Activated T-helper 1 cell treated with anti-CD3 and anti-CD28 coated beads, Interleukin-12 subunit alpha, Interleukin-12 subunit beta, Interleukin-2, Interleukin-4 antibody, amounts not matched to agents 30 ng/mL and 10 ng/mL and 1 ng/mL, durations not matched to agents 14 hours and 24 hours and 36 hours (primary cell): ENCODE measurements at regions of chr16 and their contacts with region 1.

Region 1: GRCh38 chr16:66954097-66954659 is 6.9 kb upstream of the CES3 start:
- DNase-seq: peak; percentile 71
- H3K4me3 Mint-ChIP-seq: no peak overlapping the region
- H3K27ac Mint-ChIP-seq: peak overlapping the region; percentile 18
- H3K4me1 Mint-ChIP-seq: peaks cover 30% of the 10 kb centered on the region
- H3K27me3 Mint-ChIP-seq: peaks cover 16% of the 10 kb centered on the region

Region 2: DNA sequence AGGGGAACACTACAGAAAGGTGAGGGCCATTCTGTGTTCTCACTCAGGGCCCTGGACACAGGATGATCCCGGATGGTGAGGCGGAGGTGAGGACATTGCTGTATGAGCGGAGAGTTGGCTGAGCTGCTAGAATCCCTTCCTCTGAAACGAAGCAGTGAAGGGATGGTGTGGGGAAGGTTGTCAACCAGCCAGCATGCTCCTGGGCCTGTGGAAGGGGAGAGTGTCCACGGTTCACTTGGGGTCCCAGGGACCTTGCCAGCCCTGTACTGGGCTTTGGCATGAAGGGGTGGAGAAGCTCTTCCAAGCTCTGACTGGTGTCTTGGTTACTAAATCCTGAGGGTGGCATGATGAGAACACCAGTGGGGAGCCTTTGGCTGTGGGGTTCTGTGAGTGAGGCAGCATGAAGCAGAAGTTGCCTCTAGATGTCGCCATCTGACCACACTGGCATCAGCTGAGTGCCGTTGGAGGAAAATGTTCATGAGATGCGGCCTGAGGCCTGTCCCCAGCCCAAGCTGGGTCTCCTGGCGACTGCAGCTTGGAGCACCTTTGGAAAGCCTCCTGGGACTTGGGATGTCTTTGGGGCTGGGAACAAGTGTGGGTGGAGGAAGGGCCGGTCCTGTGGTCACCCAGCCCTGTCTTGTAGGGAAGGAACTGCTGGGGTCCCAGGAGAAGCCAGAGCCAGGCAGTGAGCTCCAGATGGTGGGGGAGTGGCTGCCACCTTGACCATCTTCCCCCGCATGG is 59.1 kb before region 1 on chr16:
- intact Hi-C with region 1: loop called (anchors 2 kb)
- DNase-seq: peak; percentile 44
- H3K4me3 Mint-ChIP-seq: no peak overlapping the region
- H3K27ac Mint-ChIP-seq: peak overlapping the region; percentile 4
- H3K4me1 Mint-ChIP-seq: peaks cover 24% of the 10 kb centered on the region
- H3K27me3 Mint-ChIP-seq: no peaks in the 10 kb centered on the region

Region 3: DNA sequence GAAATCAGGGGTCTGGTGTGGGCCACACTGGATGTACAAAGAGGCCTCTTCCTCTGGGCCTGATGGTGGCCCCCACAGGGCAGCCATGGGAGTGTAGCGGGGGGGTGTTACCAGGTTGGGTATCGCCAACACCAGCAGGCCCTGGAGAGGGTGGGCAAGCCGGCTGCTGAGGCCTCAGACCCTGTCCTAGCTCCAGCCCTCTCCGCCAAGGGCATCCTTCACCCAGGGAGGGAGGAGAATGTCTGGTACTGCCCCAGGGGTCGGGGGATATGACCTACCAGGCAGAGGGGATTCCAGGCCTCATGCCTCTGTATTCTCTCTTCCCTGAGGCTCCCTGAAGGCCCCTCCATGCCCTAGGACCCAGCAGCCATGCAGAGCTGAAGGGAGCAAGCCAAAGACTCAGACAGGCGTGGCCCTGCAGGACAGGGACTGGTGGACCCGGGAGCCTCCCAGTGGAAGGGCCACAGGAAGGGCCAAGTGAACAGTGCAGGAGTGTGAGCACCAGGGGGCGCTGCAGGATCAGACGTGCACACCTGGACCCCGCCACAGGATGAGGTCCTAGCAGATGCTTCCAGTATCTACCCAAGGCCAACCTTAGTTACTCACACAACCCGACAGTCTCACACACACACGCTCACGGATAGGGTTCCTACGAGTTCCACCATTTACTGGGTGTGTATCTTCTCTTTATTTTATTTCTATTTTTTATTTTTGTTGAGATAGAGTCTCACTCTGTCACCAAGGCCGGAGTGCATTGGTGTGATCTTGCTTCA is 23.3 kb after region 1 on chr16:
- intact Hi-C with region 1: loop called (anchors 1 kb)
- DNase-seq: peak; percentile 83
- H3K4me3 Mint-ChIP-seq: no peak overlapping the region
- H3K27ac Mint-ChIP-seq: peak overlapping the region; percentile 75
- H3K4me1 Mint-ChIP-seq: peaks cover 57% of the 10 kb centered on the region
- H3K27me3 Mint-ChIP-seq: no peaks in the 10 kb centered on the region

Region 4: DNA sequence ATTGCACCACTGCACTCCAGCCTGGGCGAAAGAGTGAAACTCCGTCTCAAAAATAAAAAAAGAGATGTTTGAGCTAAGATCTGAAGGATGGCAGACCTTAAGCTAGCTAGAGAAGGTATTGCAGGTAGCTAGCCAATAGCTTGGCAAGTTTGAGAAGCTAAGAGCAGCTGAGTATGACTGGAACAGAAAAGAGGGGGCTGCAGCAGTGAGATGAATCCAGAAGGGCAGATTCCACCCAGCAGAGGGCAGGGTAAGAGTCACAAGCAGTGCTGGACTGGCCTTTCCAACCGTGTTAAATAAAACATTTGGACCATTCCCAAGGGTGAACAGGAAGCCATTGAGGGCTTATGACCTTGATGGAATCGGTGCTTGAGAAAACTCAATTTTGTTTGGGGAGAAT is 149.9 kb after region 1 on chr16:
- intact Hi-C with region 1: loop called (anchors 5 kb)
- DNase-seq: no peak
- H3K4me3 Mint-ChIP-seq: no peak overlapping the region
- H3K27ac Mint-ChIP-seq: no peak overlapping the region
- H3K4me1 Mint-ChIP-seq: peaks cover 31% of the 10 kb centered on the region
- H3K27me3 Mint-ChIP-seq: no peaks in the 10 kb centered on the region

Region 5: DNA sequence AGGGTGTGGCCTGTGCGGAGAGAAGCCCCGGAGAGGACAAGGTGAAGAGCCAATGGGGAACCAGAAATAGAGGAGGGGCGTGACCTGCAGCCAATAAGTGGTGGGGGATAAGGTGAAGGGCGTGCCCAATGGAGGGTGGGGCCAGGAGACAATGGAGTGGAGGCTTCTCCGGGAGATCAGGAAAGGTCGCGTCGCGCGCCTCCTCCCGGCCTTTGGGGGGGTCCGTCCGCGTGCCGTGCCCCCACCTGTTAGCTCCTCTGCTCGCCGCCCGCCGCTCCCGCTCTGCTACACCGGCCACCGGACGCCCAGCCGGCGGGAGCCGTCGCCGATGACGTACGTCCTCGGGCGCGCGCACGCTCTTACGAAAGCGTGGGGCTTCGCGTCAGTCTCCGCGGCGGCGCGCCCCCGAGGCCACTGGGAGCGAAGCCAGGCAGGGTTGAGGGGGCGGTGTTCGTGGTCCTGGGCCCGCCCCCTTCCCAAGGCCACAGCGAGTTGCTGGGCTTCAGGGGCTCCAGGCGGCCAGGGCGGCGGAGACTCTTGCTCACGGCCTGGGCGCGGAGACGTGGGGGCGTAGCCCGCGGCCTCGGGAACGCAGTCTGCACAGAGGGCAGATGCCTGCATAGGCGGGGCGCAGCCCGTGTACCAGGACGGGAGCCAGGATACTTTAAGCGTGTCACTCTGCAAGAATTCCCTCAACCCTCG is 229.6 kb after region 1 on chr16 and contains the start of gene MATCAP1:
- intact Hi-C with region 1: loop called (anchors 1 kb)
- DNase-seq: peak; percentile 94
- H3K4me3 Mint-ChIP-seq: peak within 1 kb of the TSS; percentile 62
- H3K27ac Mint-ChIP-seq: no peak within 1 kb of the TSS
- H3K4me1 Mint-ChIP-seq: peaks cover 20% of the 10 kb centered on the region
- H3K27me3 Mint-ChIP-seq: peaks cover 8% of the 10 kb centered on the region
- total RNA-seq, gene MATCAP1: 45.5 and 48.2 TPM in 2 replicates

Region 6: DNA sequence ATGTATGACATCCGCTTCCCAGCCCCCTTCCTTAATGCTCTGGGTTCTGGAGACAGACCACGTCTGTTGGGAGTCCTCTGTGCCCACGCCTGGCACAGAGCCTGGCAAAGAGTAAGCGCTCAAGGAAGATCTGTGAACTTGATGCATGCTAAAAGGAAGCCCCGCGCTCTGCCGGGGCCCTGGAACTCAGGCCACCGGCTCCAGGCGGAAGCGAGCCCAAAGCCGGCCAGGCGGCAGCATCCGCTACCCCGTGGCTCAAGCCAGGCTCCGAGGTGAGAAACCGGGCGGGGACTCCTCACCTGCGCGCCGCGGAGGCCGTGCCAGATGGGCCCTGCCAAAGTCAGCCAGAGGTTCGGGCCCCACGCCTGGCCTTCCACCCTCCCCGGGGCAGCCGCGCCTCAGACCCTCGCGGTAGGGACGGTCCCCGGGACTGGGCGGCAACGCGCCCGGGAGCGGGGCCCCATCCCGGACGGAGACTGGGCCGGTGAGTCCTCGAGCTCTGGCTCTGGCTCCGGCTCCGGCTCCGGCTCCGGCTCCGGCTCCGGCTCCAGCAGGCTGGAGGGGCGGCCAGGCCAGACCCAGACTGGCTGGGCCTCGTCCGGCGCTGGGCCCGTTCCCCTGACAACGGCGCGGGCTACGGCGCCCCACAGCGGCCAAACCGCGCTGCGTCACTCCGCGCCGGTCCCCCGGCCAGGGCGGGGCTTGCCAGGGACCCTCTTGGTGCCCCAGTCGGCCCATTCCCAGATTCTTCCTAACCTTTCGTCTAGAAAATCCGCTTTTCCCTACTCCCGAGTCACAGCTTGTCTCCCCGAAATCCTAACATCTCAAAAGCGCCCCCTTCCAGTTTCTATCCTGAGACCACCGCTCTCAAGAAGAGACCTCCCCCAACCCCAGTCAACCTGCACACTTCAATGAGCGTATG is 462.0 kb after region 1 on chr16 and contains the start of gene ZDHHC1:
- intact Hi-C with region 1: loop called (anchors 5 kb)
- DNase-seq: peak; percentile 34
- H3K4me3 Mint-ChIP-seq: peak within 1 kb of the TSS; percentile 84
- H3K27ac Mint-ChIP-seq: peak within 1 kb of the TSS; percentile 50
- H3K4me1 Mint-ChIP-seq: peaks cover 10% of the 10 kb centered on the region
- H3K27me3 Mint-ChIP-seq: peaks cover 44% of the 10 kb centered on the region
- total RNA-seq, gene ZDHHC1: 0.76 and 0.88 TPM in 2 replicates